Caco-2 (cell line): ENCODE measurements at regions of chr5 and their contacts with region 1.

Region 1: DNA sequence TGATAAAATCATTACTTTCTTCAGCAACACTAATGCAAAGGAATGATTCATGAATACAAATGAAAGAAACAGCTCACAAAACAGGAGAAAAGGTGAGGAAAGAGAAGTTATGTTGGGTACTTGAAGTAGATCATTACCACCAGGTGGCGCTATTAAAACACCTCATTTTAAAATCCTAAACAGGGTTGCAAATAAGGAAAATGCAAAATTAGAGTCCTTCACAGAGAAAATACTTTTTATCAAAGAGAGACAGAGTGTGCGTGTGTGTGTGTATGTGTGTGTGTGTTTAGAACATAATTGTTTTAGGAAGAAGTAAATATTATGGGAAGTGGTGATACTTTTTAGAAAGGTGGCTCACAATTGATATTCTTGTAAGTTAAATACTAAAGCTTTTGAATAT is 49.5 kb upstream of the CD180 start:
- DNase-seq: peak in 1 of 2 experiments; percentile 55
- H3K4me3 ChIP-seq: no peak overlapping the region
- H3K4me3 Mint-ChIP-seq: no peak overlapping the region
- H3K27ac Mint-ChIP-seq: no peak overlapping the region
- H3K4me1 ChIP-seq: no peaks in the 10 kb centered on the region
- H3K4me1 Mint-ChIP-seq: peaks cover 11% of the 10 kb centered on the region
- H3K27me3 ChIP-seq: no peaks in the 10 kb centered on the region
- H3K27me3 Mint-ChIP-seq: no peaks in the 10 kb centered on the region
- CTCF ChIP-seq: peak; percentile 57 to 65

Region 2: GRCh38 chr5:67289763-67290521 is 43.8 kb after region 1 on chr5:
- CTCF ChIA-PET with region 1: no interaction called
- POLR2A ChIA-PET with region 1: no interaction called
- intact Hi-C with region 1: loop called (anchors 5 kb)
- DNase-seq: no peak
- H3K4me3 ChIP-seq: no peak overlapping the region
- H3K4me3 Mint-ChIP-seq: no peak overlapping the region
- H3K27ac Mint-ChIP-seq: no peak overlapping the region
- H3K4me1 ChIP-seq: peaks cover 9% of the 10 kb centered on the region; the same call in 1 of the 2 replicates
- H3K4me1 Mint-ChIP-seq: peaks cover 9% of the 10 kb centered on the region
- H3K27me3 ChIP-seq: no peaks in the 10 kb centered on the region
- H3K27me3 Mint-ChIP-seq: peaks cover 2% of the 10 kb centered on the region
- CTCF ChIP-seq: no peak

Region 3: DNA sequence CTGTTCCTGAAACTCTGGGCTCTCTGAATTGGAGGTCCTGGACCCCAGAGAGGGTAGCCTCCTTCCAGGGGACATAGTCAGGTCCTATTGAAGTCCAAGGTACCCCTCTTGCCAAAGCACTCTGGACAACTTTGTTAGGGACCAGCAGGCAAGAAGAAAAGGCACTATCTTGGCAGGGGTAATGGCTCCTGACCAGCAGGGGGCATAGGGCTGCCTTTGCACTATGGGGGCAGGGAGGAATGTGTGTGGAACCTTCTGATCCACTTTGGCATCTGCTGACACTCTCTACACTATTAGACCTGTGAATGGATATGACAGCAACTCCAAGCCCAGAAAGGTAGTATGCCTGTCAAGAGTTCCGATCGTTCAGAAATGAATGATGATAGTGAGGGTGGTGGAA is 129.5 kb after region 1 on chr5:
- CTCF ChIA-PET with region 1: no interaction called
- POLR2A ChIA-PET with region 1: no interaction called
- intact Hi-C with region 1: loop called (anchors 10 kb)
- DNase-seq: peak in 1 of 2 experiments; percentile 5
- H3K4me3 ChIP-seq: no peak overlapping the region
- H3K4me3 Mint-ChIP-seq: no peak overlapping the region
- H3K27ac Mint-ChIP-seq: no peak overlapping the region
- H3K4me1 ChIP-seq: no peaks in the 10 kb centered on the region
- H3K4me1 Mint-ChIP-seq: no peaks in the 10 kb centered on the region
- H3K27me3 ChIP-seq: no peaks in the 10 kb centered on the region; the same call in 1 of the 2 replicates
- H3K27me3 Mint-ChIP-seq: no peaks in the 10 kb centered on the region
- CTCF ChIP-seq: peak in 1 of 2 experiments; percentile 16

Region 4: GRCh38 chr5:67395790-67396418 is 149.8 kb after region 1 on chr5:
- CTCF ChIA-PET with region 1: interaction called, 3 read pairs
- POLR2A ChIA-PET with region 1: no interaction called
- intact Hi-C with region 1: loop called (anchors 5 kb)
- DNase-seq: no peak
- H3K4me3 ChIP-seq: no peak overlapping the region
- H3K4me3 Mint-ChIP-seq: no peak overlapping the region
- H3K27ac Mint-ChIP-seq: no peak overlapping the region
- H3K4me1 ChIP-seq: no peaks in the 10 kb centered on the region
- H3K4me1 Mint-ChIP-seq: peaks cover 9% of the 10 kb centered on the region
- H3K27me3 ChIP-seq: no peaks in the 10 kb centered on the region
- H3K27me3 Mint-ChIP-seq: no peaks in the 10 kb centered on the region
- CTCF ChIP-seq: no peak

Region 5: GRCh38 chr5:68252673-68253623 is 1006.8 kb after region 1 on chr5:
- CTCF ChIA-PET with region 1: interaction called, 8 read pairs
- POLR2A ChIA-PET with region 1: no interaction called
- intact Hi-C with region 1: loop called (anchors 1 kb)
- DNase-seq: peak; percentile 66 to 74
- H3K4me3 ChIP-seq: no peak overlapping the region
- H3K4me3 Mint-ChIP-seq: no peak overlapping the region
- H3K27ac Mint-ChIP-seq: no peak overlapping the region
- H3K4me1 ChIP-seq: 0 out of 2 replicates have a peak, but pooled peaks cover 8% of the 10 kb centered on the region
- H3K4me1 Mint-ChIP-seq: peaks cover 34% of the 10 kb centered on the region
- H3K27me3 ChIP-seq: no peaks in the 10 kb centered on the region
- H3K27me3 Mint-ChIP-seq: no peaks in the 10 kb centered on the region
- CTCF ChIP-seq: peak; percentile 82 to 87

Region 6: DNA sequence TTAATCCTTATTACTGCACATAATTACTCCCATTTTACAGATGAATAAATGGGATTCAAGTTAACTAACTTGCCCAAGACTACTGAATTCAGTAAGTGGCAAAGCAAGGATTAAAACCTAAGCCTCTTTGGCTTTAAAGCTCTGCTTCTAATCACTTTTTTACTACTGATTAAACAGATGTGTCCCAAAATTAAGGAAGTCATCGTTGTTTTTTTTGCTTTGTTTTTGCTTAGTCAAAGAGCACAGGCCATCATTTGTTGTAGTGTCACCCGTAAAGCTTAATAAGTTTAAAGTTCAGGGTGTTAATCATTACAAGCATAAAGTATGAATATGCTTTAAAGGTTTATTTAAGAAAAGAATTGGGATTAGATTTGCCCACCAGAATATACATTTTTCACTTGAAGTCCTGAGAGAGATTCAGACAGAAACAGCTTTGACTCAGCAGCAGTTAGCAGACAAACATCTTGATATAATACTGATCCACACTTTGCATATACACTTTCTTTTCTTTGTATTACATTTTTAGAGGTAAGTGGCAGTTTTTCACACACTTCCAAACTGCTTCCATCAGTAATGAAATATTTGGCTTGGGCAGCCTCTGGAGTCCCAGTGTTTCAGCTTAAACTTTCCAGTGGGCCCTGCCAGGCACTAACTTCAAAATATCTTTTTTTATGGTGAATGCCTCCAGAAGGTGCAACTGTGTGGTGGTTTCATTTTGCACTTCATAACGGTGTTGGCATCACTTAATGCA is 1022.2 kb after region 1 on chr5:
- CTCF ChIA-PET with region 1: interaction called, 8 read pairs
- POLR2A ChIA-PET with region 1: no interaction called
- intact Hi-C with region 1: loop called (anchors 5 kb)
- DNase-seq: no peak
- H3K4me3 ChIP-seq: no peak overlapping the region
- H3K4me3 Mint-ChIP-seq: no peak overlapping the region
- H3K27ac Mint-ChIP-seq: no peak overlapping the region
- H3K4me1 ChIP-seq: peaks cover 9% of the 10 kb centered on the region; the same call in 1 of the 2 replicates
- H3K4me1 Mint-ChIP-seq: no peaks in the 10 kb centered on the region
- H3K27me3 ChIP-seq: no peaks in the 10 kb centered on the region
- H3K27me3 Mint-ChIP-seq: no peaks in the 10 kb centered on the region
- CTCF ChIP-seq: no peak